ENCODE measurements at regions of chr4 and their contacts with region 1.

Region 1: GRCh38 chr4:159006202-159006601 is 96.7 kb upstream of the RAPGEF2 start:
- DNase-seq: peak; percentile 54 to 69
- H3K4me3 ChIP-seq: no peak overlapping the region
- H3K4me3 Mint-ChIP-seq: no peak overlapping the region
- H3K27ac Mint-ChIP-seq: peak overlapping the region; percentile 23
- H3K4me1 ChIP-seq: peaks cover 13% of the 10 kb centered on the region; the same call in 1 of the 2 replicates
- H3K4me1 Mint-ChIP-seq: peaks cover 6% of the 10 kb centered on the region
- H3K27me3 ChIP-seq: no peaks in the 10 kb centered on the region
- H3K27me3 Mint-ChIP-seq: no peaks in the 10 kb centered on the region
- CTCF ChIP-seq: no peak

Region 2: DNA sequence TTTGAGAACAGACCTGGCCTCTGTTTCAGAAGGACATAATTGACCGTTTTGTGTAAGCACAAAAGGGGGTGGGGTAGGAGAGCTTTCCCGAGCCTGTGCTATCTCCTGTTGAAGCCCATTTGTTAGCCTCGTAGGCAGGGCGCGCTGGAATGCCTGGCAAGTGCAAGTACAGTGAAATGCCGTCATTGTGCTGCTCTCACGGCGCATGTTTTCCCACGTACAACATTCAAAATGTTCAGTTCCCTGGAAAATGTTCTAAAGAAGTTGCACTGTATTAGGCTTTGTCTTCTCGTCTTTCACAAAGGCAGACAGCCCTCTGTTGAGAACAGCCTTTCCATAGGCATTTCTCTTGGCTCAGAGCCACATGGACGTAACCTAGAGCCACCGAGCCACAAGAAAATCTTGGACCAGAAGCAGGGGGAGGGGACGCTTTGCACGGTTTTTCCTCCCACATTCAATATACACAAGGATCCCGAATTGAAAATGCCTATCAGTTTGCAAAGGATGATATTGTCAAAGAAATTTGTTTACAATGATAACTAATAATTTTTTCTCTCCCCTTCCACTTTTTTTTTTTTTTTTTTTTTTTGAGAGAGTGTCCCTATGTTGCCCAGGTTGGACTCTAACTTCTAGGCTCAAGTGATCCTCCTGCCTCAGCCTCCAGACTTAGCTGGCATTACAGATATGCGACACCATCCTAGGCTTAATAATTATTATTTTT is 42.1 kb after region 1 on chr4:
- CTCF ChIA-PET with region 1: no interaction called
- POLR2A ChIA-PET with region 1: no interaction called
- intact Hi-C with region 1: loop called (anchors 5 kb)
- DNase-seq: peak; percentile 51 to 59
- H3K4me3 ChIP-seq: peak overlapping the region; percentile 16; the same call in 1 of the 2 replicates
- H3K4me3 Mint-ChIP-seq: peak overlapping the region; percentile 40
- H3K27ac Mint-ChIP-seq: peak overlapping the region; percentile 68
- H3K4me1 ChIP-seq: peaks cover 23% of the 10 kb centered on the region
- H3K4me1 Mint-ChIP-seq: peaks cover 24% of the 10 kb centered on the region
- H3K27me3 ChIP-seq: no peaks in the 10 kb centered on the region
- H3K27me3 Mint-ChIP-seq: no peaks in the 10 kb centered on the region
- CTCF ChIP-seq: no peak

Region 3: DNA sequence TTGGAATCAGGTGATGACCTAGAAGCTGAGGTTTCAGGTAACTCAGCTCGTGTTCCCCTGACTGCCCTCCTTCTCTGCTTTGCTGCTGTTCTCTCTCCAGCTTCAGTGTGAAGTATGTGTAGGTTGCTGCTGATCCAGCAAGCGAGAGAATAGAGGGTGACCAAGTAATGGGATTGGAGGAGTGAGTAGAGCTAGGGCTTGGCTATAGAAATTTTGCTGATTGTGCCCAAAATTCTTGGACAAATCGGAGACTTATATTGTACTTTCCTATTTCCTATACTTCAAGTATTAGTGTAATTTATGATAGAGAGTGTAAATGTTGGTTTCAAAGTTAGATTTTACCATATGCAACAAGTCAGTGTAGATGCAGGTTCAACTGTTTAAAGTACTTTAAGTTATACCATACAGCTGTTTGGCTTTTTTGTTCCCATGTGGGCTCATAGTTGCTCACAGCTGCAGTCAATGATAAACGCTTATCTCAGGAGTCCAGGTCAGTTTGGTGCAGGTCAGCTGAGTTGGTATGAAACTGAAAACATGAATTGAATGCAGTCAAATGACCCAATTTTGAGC is 144.7 kb after region 1 on chr4:
- CTCF ChIA-PET with region 1: no interaction called
- POLR2A ChIA-PET with region 1: no interaction called
- intact Hi-C with region 1: no loop called
- DNase-seq: no peak
- H3K4me3 ChIP-seq: no peak overlapping the region
- H3K4me3 Mint-ChIP-seq: no peak overlapping the region
- H3K27ac Mint-ChIP-seq: no peak overlapping the region
- H3K4me1 ChIP-seq: peaks cover 43% of the 10 kb centered on the region
- H3K4me1 Mint-ChIP-seq: peaks cover 39% of the 10 kb centered on the region
- H3K27me3 ChIP-seq: no peaks in the 10 kb centered on the region
- H3K27me3 Mint-ChIP-seq: no peaks in the 10 kb centered on the region
- CTCF ChIP-seq: no peak